Esophagus muscularis mucosa (tissue), 4 donors: ENCODE measurements at regions of chr11 and their contacts with region 1.

Region 1: GRCh38 chr11:85627998-85628770 is at the start of gene TMEM126B:
- DNase-seq: peak; percentile 99
- H3K4me3 ChIP-seq: peak within 1 kb of the TSS; percentile 69 to 81 (median 78)
- H3K27ac ChIP-seq: peak within 1 kb of the TSS; percentile 90 to 97 (median 95)
- H3K4me1 ChIP-seq: peaks cover 10 to 49% (median 42%) of the 10 kb centered on the region in 4 donors
- H3K27me3 ChIP-seq: no peaks in the 10 kb centered on the region
- CTCF ChIP-seq: no peak
- EP300 ChIP-seq: peak; percentile 63
- POLR2A ChIP-seq: peak; percentile 49
- total RNA-seq, gene TMEM126B: 25.4 to 65.2 (median 46.6) TPM

Region 2: GRCh38 chr11:85170226-85170625 is 458.0 kb before region 1 on chr11:
- intact Hi-C with region 1: no loop called
- DNase-seq: no peak
- H3K4me3 ChIP-seq: no peak overlapping the region
- H3K27ac ChIP-seq: no peak overlapping the region
- H3K4me1 ChIP-seq: no peaks in the 10 kb centered on the region
- H3K27me3 ChIP-seq: no peaks in the 10 kb centered on the region
- CTCF ChIP-seq: no peak
- EP300 ChIP-seq: no peak
- POLR2A ChIP-seq: no peak

Region 3: DNA sequence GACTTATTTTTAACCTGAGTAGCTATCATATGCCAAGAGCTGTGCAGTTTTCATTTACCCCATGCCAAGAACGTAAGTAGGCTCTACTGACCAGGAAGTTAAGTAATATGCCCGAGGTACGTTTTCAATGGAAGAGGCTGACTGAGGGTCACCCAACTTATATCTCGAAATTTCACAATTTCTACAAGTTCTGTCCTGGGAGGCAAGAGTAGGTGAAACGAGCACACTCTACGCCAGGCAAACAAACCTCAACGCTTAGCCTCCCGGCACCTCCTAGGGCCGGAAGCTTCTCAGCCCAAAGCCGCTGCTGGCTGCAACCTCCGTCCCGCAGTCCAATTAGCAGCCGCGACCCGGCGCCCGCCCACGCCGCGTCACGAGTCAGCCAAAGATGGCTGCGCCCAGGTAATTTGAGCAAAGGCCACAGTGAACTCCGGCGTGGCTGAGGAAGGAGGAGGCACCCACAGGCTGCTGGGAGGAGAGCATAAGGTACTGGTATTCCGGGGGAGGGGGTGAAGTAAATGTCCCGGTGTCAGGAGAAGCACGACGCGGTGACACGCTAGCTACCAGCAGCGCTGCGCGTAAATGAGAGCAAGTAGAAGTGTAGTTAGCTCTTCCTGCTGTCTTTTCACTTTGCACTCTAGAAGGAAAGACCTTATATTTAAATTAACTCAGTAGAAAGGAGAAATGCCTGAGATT is 19.6 kb after region 1 on chr11 and contains the start of gene TMEM126A:
- intact Hi-C with region 1: loop called (anchors 2 kb)
- DNase-seq: peak; percentile 97
- H3K4me3 ChIP-seq: peak within 1 kb of the TSS; percentile 59 to 82 (median 73)
- H3K27ac ChIP-seq: peak within 1 kb of the TSS; percentile 82 to 86 (median 84)
- H3K4me1 ChIP-seq: peaks cover 20 to 25% (median 21%) of the 10 kb centered on the region in 4 donors
- H3K27me3 ChIP-seq: no peaks in the 10 kb centered on the region
- CTCF ChIP-seq: no peak
- EP300 ChIP-seq: no peak
- POLR2A ChIP-seq: peak; percentile 52
- total RNA-seq, gene TMEM126A: 19.0 to 48.6 (median 26.8) TPM

Region 4: DNA sequence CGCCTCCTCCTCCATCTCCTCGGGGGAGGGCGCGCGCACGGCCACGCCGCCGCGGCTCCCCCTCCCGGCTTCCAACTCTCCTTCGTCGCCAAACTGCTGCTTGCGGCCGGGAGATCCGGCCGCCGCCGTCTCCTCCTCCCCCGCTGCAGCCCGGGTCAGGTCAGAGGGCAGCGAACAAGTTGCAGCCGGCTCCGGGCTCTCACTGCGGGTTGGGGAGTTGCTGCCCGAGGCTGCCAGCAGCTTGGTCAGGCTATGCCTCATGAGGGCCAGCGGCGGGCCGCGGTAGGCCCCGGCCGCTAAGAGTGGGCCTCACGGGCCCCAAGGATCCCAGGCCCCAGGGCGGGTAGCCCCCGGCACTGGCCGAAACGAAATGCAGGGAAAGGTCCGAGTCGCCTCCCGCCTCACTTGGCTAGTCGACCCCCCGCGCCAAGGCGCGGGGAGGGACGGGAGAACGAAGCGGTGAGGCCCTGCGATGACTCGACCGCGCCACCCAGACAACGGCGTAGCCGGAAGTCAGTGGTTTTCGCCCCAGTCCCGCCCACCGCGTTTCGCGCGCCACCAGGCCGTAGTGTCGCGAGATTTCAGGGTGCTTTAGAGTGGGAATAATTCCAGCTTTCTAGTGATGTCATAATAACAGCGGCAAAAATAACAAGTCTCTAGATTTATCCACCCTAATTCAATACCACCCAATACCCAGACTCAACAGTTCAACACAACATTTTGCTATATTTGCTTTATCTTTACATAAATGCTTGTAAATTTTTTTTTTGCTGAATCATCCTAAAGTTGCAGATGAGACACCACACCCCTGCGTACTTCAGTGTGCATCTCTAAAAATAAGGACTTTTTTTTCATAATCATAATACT is 36.7 kb after region 1 on chr11 and contains the start of gene CREBZF:
- intact Hi-C with region 1: loop called (anchors 2 kb)
- DNase-seq: peak; percentile 98
- H3K4me3 ChIP-seq: peak within 1 kb of the TSS; percentile 82 to 90 (median 86)
- H3K27ac ChIP-seq: peak within 1 kb of the TSS; percentile 94 to 99 (median 96)
- H3K4me1 ChIP-seq: peaks cover 34 to 36% (median 35%) of the 10 kb centered on the region in 4 donors
- H3K27me3 ChIP-seq: no peaks in the 10 kb centered on the region
- CTCF ChIP-seq: no peak
- EP300 ChIP-seq: no peak
- POLR2A ChIP-seq: peak; percentile 94
- total RNA-seq, gene CREBZF: 34.8 to 60.6 (median 37.0) TPM